ENCODE measurements at regions of chr3 and their contacts with region 1.

Region 1: DNA sequence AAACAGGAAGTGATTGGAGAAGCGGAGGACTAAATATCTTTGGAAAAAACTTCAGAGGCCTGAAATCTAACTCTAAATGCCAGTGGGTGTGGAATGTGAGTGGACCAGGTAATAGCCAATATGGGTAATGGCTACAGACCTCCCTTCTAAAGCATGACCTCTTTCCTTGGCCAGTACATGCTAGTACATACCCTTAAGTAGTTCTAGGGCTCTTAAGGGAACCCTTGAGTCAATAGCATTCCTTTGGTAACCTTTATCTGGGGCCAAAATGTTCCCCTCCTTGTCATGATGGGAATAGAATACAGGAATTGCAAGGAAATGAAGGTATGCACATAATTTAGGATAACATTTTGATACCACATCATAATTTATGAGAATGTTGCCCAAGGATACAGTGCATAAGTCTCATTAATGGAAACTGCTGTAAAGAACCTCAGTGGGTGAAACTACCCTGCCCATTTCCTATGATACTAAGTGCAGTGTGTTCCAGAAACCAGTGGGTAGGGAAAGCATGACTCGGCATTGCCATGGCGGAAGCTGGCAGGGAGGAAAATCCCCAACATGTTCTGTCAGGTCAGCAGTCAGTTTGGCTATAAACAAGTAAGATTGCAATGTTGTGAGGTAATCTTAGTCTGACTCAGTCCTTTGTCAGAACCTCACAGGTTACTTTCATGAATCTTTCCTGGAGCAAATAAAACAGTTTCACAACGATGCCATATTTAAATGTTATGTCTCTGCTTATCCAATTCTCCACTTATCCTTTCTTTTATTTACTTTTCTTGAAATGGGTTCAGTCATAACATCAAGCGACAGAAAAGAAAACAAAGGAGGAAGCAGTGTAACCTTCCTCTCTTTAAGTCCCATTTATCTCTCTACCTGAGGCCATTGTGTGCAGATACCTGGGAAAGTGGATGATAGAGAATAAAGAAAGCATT is 23.5 kb upstream of the RAP2B start:
- DNase-seq: peak; percentile 24 to 70 (median 62)
- H3K4me3 ChIP-seq: no peak overlapping the region
- H3K27ac ChIP-seq: peak overlapping the region in 2 of 5 donors; percentile 54 to 62
- H3K4me1 ChIP-seq: no peaks in the 10 kb centered on the region
- H3K27me3 ChIP-seq: no peaks in the 10 kb centered on the region
- CTCF ChIP-seq: no peak
- POLR2A ChIP-seq: no peak

Region 2: DNA sequence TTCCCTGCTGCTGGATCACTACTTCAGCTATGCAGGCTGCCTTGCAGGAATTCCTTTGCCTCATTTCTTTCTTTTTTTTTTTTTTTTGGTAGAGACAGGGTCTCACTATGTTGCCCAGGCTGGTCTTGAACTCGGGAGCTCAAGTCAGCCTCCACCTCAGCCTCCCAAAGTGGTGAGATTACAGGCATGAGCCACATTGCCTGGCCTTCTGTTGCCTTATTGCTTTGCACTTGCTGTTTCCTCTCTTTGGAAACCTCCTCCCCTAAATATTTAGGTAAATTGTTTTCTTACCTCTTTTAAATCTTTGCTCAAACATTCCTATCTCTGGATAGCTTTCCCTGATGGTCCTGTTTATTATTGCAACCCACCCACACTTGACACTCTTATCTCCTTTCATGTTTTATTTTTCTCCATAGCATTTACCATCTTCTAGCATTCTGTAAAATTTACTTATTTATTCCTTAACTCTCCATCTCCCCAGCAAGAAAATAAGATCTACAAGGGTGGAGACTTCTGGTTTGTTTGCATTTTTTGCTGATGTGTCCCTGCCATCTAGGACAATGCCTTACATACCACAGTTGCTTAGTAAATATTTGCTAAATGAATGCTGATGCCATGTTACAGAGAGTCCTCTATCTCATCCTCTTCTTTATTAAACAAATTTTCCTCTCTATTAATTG is 168.8 kb before region 1 on chr3:
- intact Hi-C with region 1: no loop called
- DNase-seq: no peak
- H3K4me3 ChIP-seq: no peak overlapping the region
- H3K27ac ChIP-seq: no peak overlapping the region
- H3K4me1 ChIP-seq: no peaks in the 10 kb centered on the region
- H3K27me3 ChIP-seq: no peaks in the 10 kb centered on the region
- CTCF ChIP-seq: no peak
- POLR2A ChIP-seq: no peak

Region 3: DNA sequence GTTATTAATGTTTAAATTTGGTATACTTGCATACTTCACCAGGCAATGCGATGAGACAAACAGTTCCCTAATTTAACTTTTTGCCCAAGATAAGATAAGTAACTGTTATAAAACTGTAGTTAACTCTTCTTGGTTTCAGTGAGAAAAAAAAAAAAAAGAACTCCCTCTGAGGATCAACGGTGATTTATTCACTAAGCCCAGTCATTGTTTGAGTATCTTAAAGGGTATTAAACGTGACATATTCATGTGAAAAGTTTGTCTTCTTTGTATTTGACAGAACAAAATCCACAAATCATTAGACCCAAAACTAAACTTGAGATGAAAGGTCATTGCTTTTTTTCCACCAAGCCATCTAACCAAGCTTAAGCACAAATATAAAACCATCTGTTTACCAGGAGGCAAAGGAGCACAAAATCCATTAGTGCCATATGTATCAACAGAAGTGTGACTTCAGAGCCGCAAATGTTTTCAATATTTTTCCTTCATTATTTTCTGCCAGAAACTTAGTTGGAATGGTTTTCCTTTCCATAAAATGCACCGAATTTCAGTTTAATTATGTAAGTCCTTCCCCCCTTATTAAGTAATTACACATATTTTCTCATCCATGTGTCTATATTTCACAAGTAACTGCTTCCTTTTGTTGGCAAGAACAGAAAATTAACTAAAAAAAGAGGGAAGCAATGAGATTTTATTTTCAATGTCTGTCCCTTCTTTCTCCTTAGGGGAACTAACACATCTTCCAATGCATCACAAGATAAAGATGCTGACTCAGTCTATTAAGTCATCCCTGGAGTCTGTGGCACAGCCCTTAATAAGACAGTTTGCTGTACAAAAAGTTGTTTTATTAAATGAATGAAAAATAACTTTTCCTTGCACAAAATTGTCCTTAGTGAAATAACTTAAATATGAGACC is 68.7 kb before region 1 on chr3:
- intact Hi-C with region 1: loop called in 1 of 2 experiments (anchors 10 kb)
- DNase-seq: no peak
- H3K4me3 ChIP-seq: no peak overlapping the region
- H3K27ac ChIP-seq: no peak overlapping the region
- H3K4me1 ChIP-seq: no peaks in the 10 kb centered on the region
- H3K27me3 ChIP-seq: no peaks in the 10 kb centered on the region
- CTCF ChIP-seq: no peak
- POLR2A ChIP-seq: no peak